ENCODE measurements at regions of chr2 and their contacts with region 1.

Region 1: DNA sequence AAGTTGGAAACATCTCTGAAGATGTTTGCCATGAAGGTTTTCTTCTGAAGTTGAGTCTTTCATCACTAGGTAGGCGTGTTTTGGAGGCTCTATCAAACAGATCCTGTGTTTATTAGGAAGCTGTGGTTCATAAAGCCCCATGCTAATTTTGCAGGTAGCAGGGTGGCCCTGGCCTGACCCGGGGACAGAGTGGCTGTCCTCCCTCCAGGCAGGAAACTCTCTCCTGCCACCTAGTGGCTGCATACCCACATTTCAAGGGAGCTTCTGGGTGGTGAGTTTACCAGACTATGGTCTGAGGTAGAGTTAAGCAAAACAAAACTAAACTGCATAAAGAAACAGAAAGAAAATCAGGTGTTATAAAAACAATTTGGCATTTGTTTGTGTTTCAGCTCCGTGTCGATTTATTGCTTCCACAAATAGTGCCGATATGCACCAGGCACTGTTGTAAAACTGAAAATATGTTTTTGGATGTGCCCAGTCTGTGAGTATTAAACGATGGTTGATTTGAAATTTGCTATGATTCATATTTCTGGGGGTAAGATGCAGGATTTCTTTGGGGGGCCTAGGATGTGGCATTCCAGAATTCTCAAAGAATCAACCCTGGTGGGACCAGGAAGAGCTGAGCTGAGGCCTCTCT is 26.0 kb upstream of the IL37 start:
- DNase-seq: peak; percentile 70 to 83 (median 81)
- H3K4me3 ChIP-seq: no peak overlapping the region
- H3K4me3 Mint-ChIP-seq: no peak overlapping the region
- H3K27ac ChIP-seq: no peak overlapping the region
- H3K27ac Mint-ChIP-seq: peak overlapping the region in 5 of 7 donors; percentile 35 to 85 (median 61)
- H3K4me1 ChIP-seq: peaks cover 43 to 54% of the 10 kb centered on the region in 2 donors
- H3K4me1 Mint-ChIP-seq: peaks cover 49% of the 10 kb centered on the region
- H3K27me3 ChIP-seq: no peaks in the 10 kb centered on the region
- H3K27me3 Mint-ChIP-seq: peaks cover 0 to 3% (median 0%) of the 10 kb centered on the region in 3 donors
- CTCF ChIP-seq: peak; percentile 97

Region 2: GRCh38 chr2:112836695-112837117 is 48.3 kb before region 1 on chr2 and contains the start of gene IL1B:
- intact Hi-C with region 1: loop called (anchors 2 to 5 kb)
- DNase-seq: peak; percentile 92 to 96 (median 93)
- H3K4me3 ChIP-seq: peak within 1 kb of the TSS; percentile 40 to 100 (median 91)
- H3K4me3 Mint-ChIP-seq: peak within 1 kb of the TSS; percentile 94 to 98
- H3K27ac ChIP-seq: peak within 1 kb of the TSS; percentile 83 to 94
- H3K27ac Mint-ChIP-seq: peak within 1 kb of the TSS; percentile 96 to 100 (median 99)
- H3K4me1 ChIP-seq: peaks cover 96% of the 10 kb centered on the region in 2 donors
- H3K4me1 Mint-ChIP-seq: peaks cover 96% of the 10 kb centered on the region
- H3K27me3 ChIP-seq: no peaks in the 10 kb centered on the region
- H3K27me3 Mint-ChIP-seq: peaks cover 0 to 9% (median 6%) of the 10 kb centered on the region in 3 donors
- CTCF ChIP-seq: no peak
- polyA plus RNA-seq, gene IL1B: 65.1 to 1,419 (median 114) TPM

Region 3: GRCh38 chr2:112941753-112942658 is 57.0 kb after region 1 on chr2:
- intact Hi-C with region 1: loop called in 1 of 2 experiments (anchors 5 kb)
- DNase-seq: peak; percentile 71 to 84 (median 80)
- H3K4me3 ChIP-seq: no peak overlapping the region
- H3K4me3 Mint-ChIP-seq: no peak overlapping the region
- H3K27ac ChIP-seq: no peak overlapping the region
- H3K27ac Mint-ChIP-seq: no peak overlapping the region
- H3K4me1 ChIP-seq: peaks cover 3 to 5% of the 10 kb centered on the region in 2 donors
- H3K4me1 Mint-ChIP-seq: peaks cover 5% of the 10 kb centered on the region
- H3K27me3 ChIP-seq: no peaks in the 10 kb centered on the region
- H3K27me3 Mint-ChIP-seq: peaks cover 0 to 3% (median 0%) of the 10 kb centered on the region in 3 donors
- CTCF ChIP-seq: peak; percentile 95